ENCODE measurements at regions of chr18 and their contacts with region 1.

Region 1: DNA sequence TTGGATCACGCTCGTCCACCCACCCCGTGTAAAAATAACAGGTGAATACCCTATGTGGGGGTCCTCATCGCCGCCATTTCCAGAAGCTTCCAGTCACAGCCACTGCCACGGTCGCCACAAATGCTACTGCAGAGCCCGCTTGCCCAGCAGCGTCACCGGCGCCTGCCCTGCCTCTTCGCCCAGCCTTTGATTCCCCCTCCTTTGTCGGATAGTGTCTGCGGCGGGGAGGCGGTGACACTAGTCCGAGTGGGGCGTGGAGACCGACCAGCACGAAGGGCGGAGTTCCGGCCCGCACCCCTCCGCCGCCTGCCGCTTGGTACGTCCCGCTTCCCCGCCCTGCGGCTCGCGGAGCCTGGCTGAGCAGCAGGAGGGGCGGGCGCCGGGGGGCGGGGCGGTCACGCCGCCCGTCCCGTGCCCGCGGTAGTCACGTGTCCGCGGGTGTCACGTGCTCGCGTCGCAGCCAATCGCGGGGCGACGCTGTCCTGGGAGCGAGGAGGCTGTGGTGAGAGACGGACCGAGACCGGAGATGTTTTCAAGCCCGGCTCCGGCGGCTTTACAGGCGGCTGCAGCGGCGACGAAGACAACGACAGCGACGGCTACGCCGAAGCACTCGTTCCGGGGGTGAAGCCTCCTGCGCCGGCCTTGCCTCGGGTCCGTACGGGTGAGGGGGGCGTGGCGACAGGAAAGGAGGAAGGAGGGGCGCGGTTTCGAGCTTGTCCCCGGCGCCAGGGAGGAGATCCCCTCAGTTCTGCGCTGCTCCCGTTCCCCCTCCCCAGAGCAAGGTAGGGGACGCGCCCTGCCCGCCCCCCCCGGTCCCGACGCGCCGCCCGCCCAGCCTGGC is at the start of gene ANKRD12:
- DNase-seq: peak; percentile 94 to 99 (median 98)
- ATAC-seq: peak; percentile 70
- H3K4me3 ChIP-seq: peak within 1 kb of the TSS; percentile 83
- H3K4me3 Mint-ChIP-seq: peak within 1 kb of the TSS; percentile 98
- H3K27ac ChIP-seq: peak within 1 kb of the TSS; percentile 94 to 96
- H3K27ac Mint-ChIP-seq: peak within 1 kb of the TSS; percentile 99
- H3K4me1 ChIP-seq: peaks cover 24% of the 10 kb centered on the region
- H3K4me1 Mint-ChIP-seq: peaks cover 75% of the 10 kb centered on the region
- H3K27me3 ChIP-seq: no peaks in the 10 kb centered on the region
- H3K27me3 Mint-ChIP-seq: no peaks in the 10 kb centered on the region
- CTCF ChIP-seq: no peak
- total RNA-seq, gene ANKRD12: 160 to 164 TPM

Region 2: GRCh38 chr18:9102508-9103375 is 33.8 kb before region 1 on chr18 and contains the start of gene NDUFV2:
- CTCF ChIA-PET with region 1: interaction called, 66 read pairs
- POLR2A ChIA-PET with region 1: interaction called, 914 read pairs
- intact Hi-C with region 1: loop called (anchors 1 kb)
- DNase-seq: peak; percentile 93 to 99 (median 98)
- ATAC-seq: peak; percentile 87
- H3K4me3 ChIP-seq: peak within 1 kb of the TSS; percentile 74
- H3K4me3 Mint-ChIP-seq: peak within 1 kb of the TSS; percentile 95
- H3K27ac ChIP-seq: peak within 1 kb of the TSS; percentile 82 to 91
- H3K27ac Mint-ChIP-seq: peak within 1 kb of the TSS; percentile 90
- H3K4me1 ChIP-seq: peaks cover 22% of the 10 kb centered on the region
- H3K4me1 Mint-ChIP-seq: peaks cover 65% of the 10 kb centered on the region
- H3K27me3 ChIP-seq: no peaks in the 10 kb centered on the region
- H3K27me3 Mint-ChIP-seq: no peaks in the 10 kb centered on the region
- CTCF ChIP-seq: no peak
- total RNA-seq, gene NDUFV2: 230 to 231 TPM

Region 3: GRCh38 chr18:9126337-9126736 is 10.2 kb before region 1 on chr18:
- CTCF ChIA-PET with region 1: interaction called, 11 read pairs
- POLR2A ChIA-PET with region 1: interaction called, 914 read pairs
- intact Hi-C with region 1: no loop called
- DNase-seq: no peak
- ATAC-seq: no peak
- H3K4me3 ChIP-seq: no peak overlapping the region
- H3K4me3 Mint-ChIP-seq: no peak overlapping the region
- H3K27ac ChIP-seq: no peak overlapping the region
- H3K27ac Mint-ChIP-seq: peak overlapping the region; percentile 54
- H3K4me1 ChIP-seq: peaks cover 9% of the 10 kb centered on the region
- H3K4me1 Mint-ChIP-seq: peaks cover 72% of the 10 kb centered on the region
- H3K27me3 ChIP-seq: no peaks in the 10 kb centered on the region
- H3K27me3 Mint-ChIP-seq: no peaks in the 10 kb centered on the region
- CTCF ChIP-seq: no peak

Region 4: GRCh38 chr18:9173770-9174233 is 37.3 kb after region 1 on chr18:
- CTCF ChIA-PET with region 1: no interaction called
- POLR2A ChIA-PET with region 1: no interaction called
- intact Hi-C with region 1: no loop called
- DNase-seq: no peak
- ATAC-seq: no peak
- H3K4me3 ChIP-seq: no peak overlapping the region
- H3K4me3 Mint-ChIP-seq: no peak overlapping the region
- H3K27ac ChIP-seq: no peak overlapping the region
- H3K27ac Mint-ChIP-seq: no peak overlapping the region
- H3K4me1 ChIP-seq: peaks cover 44% of the 10 kb centered on the region
- H3K4me1 Mint-ChIP-seq: peaks cover 83% of the 10 kb centered on the region
- H3K27me3 ChIP-seq: no peaks in the 10 kb centered on the region
- H3K27me3 Mint-ChIP-seq: no peaks in the 10 kb centered on the region
- CTCF ChIP-seq: no peak

Region 5: DNA sequence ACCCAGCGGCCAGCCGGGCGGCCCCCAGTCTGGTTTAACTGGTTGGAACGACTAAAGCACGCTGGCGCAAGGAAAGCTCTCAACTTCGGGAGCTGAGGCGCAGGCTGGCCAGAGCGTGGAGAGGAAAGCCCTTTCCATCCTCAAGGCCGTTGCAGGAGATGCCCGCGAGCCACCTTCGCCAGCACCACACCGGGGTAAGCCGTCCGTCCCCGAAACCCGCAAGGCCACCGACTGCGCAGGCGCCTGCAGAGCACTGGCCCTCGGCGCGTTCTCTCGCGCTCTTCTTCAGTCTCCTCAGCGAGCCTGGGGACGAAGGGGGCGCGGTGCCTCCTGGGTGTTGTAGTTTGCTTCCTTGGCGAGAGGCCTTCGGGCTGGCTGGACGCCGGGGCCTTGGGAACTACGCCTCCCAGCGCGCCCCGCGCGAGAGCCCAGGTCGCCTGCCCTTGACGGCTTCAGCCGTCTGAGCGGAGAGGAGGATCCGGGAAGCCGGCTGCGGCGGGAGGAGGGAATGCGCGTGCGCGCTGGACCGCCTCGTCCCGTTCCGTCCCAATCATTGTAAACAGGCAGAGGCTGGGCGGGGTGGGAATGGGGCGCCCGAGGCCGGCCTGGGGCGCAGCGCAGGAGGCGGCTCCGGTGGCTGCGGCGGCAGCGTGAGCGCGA is 338.6 kb after region 1 on chr18 and contains the start of gene RALBP1:
- CTCF ChIA-PET with region 1: no interaction called
- POLR2A ChIA-PET with region 1: no interaction called
- intact Hi-C with region 1: loop called in 1 of 2 experiments (anchors 2 kb)
- DNase-seq: peak; percentile 93 to 99 (median 97)
- ATAC-seq: peak; percentile 98
- H3K4me3 ChIP-seq: peak within 1 kb of the TSS; percentile 72
- H3K4me3 Mint-ChIP-seq: peak within 1 kb of the TSS; percentile 98
- H3K27ac ChIP-seq: peak within 1 kb of the TSS; percentile 57 to 59
- H3K27ac Mint-ChIP-seq: peak within 1 kb of the TSS; percentile 92
- H3K4me1 ChIP-seq: peaks cover 25% of the 10 kb centered on the region
- H3K4me1 Mint-ChIP-seq: peaks cover 33% of the 10 kb centered on the region
- H3K27me3 ChIP-seq: no peaks in the 10 kb centered on the region
- H3K27me3 Mint-ChIP-seq: peaks cover 4% of the 10 kb centered on the region
- CTCF ChIP-seq: no peak
- total RNA-seq, gene RALBP1: 6.5 to 7.8 TPM

Measured in CD4-positive, alpha-beta T cell (primary cell).